CD4-positive, alpha-beta memory T cell (primary cell): ENCODE measurements at regions of chr15 and their contacts with region 1.

Region 1: GRCh38 chr15:43510200-43511011 is 7.0 kb upstream of the MAP1A start:
- DNase-seq: peak; percentile 96 to 98 (median 97)
- H3K4me3 ChIP-seq: peak overlapping the region; percentile 86 to 87
- H3K4me3 Mint-ChIP-seq: peak overlapping the region; percentile 92 to 98 (median 95)
- H3K27ac ChIP-seq: peak overlapping the region; percentile 71
- H3K27ac Mint-ChIP-seq: peak overlapping the region; percentile 96 to 99 (median 97)
- H3K4me1 ChIP-seq: peaks cover 40% of the 10 kb centered on the region
- H3K4me1 Mint-ChIP-seq: peaks cover 23 to 48% (median 38%) of the 10 kb centered on the region in 4 donors
- H3K27me3 ChIP-seq: no peaks in the 10 kb centered on the region
- H3K27me3 Mint-ChIP-seq: no peaks in the 10 kb centered on the region

Region 2: GRCh38 chr15:43329960-43330779 is 180.2 kb before region 1 on chr15 and contains the start of gene LCMT2:
- CTCF ChIA-PET with region 1: interaction called, 3 read pairs
- POLR2A ChIA-PET with region 1: interaction called, 6 read pairs
- intact Hi-C with region 1: loop called (anchors 1 kb)
- DNase-seq: peak; percentile 91 to 95 (median 94)
- H3K4me3 ChIP-seq: peak within 1 kb of the TSS; percentile 67 to 91
- H3K4me3 Mint-ChIP-seq: peak within 1 kb of the TSS; percentile 94 to 99 (median 96)
- H3K27ac ChIP-seq: peak within 1 kb of the TSS; percentile 90
- H3K27ac Mint-ChIP-seq: peak within 1 kb of the TSS; percentile 98 to 100 (median 99)
- H3K4me1 ChIP-seq: peaks cover 22% of the 10 kb centered on the region
- H3K4me1 Mint-ChIP-seq: peaks cover 16 to 50% (median 31%) of the 10 kb centered on the region in 4 donors
- H3K27me3 ChIP-seq: no peaks in the 10 kb centered on the region
- H3K27me3 Mint-ChIP-seq: peaks cover 0 to 3% of the 10 kb centered on the region in 2 donors
- total RNA-seq, gene LCMT2: 17.0 to 17.8 TPM

Region 3: GRCh38 chr15:43440721-43441281 is 69.6 kb before region 1 on chr15:
- CTCF ChIA-PET with region 1: interaction called, 58 read pairs
- POLR2A ChIA-PET with region 1: interaction called, 4 read pairs
- intact Hi-C with region 1: loop called (anchors 1 kb)
- DNase-seq: peak; percentile 10 to 29 (median 14)
- H3K4me3 ChIP-seq: no peak overlapping the region
- H3K4me3 Mint-ChIP-seq: no peak overlapping the region
- H3K27ac ChIP-seq: no peak overlapping the region
- H3K27ac Mint-ChIP-seq: peak overlapping the region in 1 of 7 donors; percentile 13
- H3K4me1 ChIP-seq: no peaks in the 10 kb centered on the region
- H3K4me1 Mint-ChIP-seq: peaks cover 3 to 6% (median 6%) of the 10 kb centered on the region in 4 donors
- H3K27me3 ChIP-seq: no peaks in the 10 kb centered on the region
- H3K27me3 Mint-ChIP-seq: no peaks in the 10 kb centered on the region

Region 4: GRCh38 chr15:43483306-43484128 is 26.9 kb before region 1 on chr15:
- CTCF ChIA-PET with region 1: interaction called, 252 read pairs
- POLR2A ChIA-PET with region 1: interaction called, 14 read pairs
- intact Hi-C with region 1: loop called (anchors 1 kb)
- DNase-seq: peak in 4 of 5 donors; percentile 29 to 40 (median 32)
- H3K4me3 ChIP-seq: no peak overlapping the region
- H3K4me3 Mint-ChIP-seq: no peak overlapping the region
- H3K27ac ChIP-seq: no peak overlapping the region
- H3K27ac Mint-ChIP-seq: peak overlapping the region in 3 of 7 donors; percentile 22 to 55 (median 51)
- H3K4me1 ChIP-seq: no peaks in the 10 kb centered on the region
- H3K4me1 Mint-ChIP-seq: peaks cover 0 to 18% (median 12%) of the 10 kb centered on the region in 4 donors
- H3K27me3 ChIP-seq: no peaks in the 10 kb centered on the region
- H3K27me3 Mint-ChIP-seq: no peaks in the 10 kb centered on the region

Region 5: GRCh38 chr15:43499635-43500034 is 10.8 kb before region 1 on chr15:
- CTCF ChIA-PET with region 1: interaction called, 252 read pairs
- POLR2A ChIA-PET with region 1: interaction called, 97 read pairs
- intact Hi-C with region 1: no loop called
- DNase-seq: no peak
- H3K4me3 ChIP-seq: no peak overlapping the region
- H3K4me3 Mint-ChIP-seq: no peak overlapping the region
- H3K27ac ChIP-seq: no peak overlapping the region
- H3K27ac Mint-ChIP-seq: peak overlapping the region in 2 of 7 donors; percentile 15 to 46
- H3K4me1 ChIP-seq: no peaks in the 10 kb centered on the region
- H3K4me1 Mint-ChIP-seq: peaks cover 0 to 2% (median under 1%) of the 10 kb centered on the region in 4 donors
- H3K27me3 ChIP-seq: no peaks in the 10 kb centered on the region
- H3K27me3 Mint-ChIP-seq: no peaks in the 10 kb centered on the region

Region 6: GRCh38 chr15:43702174-43702573 is 191.8 kb after region 1 on chr15:
- CTCF ChIA-PET with region 1: no interaction called
- POLR2A ChIA-PET with region 1: no interaction called
- intact Hi-C with region 1: no loop called
- DNase-seq: no peak
- H3K4me3 ChIP-seq: no peak overlapping the region
- H3K4me3 Mint-ChIP-seq: no peak overlapping the region
- H3K27ac ChIP-seq: no peak overlapping the region
- H3K27ac Mint-ChIP-seq: no peak overlapping the region
- H3K4me1 ChIP-seq: no peaks in the 10 kb centered on the region
- H3K4me1 Mint-ChIP-seq: no peaks in the 10 kb centered on the region
- H3K27me3 ChIP-seq: no peaks in the 10 kb centered on the region
- H3K27me3 Mint-ChIP-seq: peaks cover 13 to 15% of the 10 kb centered on the region in 2 donors

Region 7: DNA sequence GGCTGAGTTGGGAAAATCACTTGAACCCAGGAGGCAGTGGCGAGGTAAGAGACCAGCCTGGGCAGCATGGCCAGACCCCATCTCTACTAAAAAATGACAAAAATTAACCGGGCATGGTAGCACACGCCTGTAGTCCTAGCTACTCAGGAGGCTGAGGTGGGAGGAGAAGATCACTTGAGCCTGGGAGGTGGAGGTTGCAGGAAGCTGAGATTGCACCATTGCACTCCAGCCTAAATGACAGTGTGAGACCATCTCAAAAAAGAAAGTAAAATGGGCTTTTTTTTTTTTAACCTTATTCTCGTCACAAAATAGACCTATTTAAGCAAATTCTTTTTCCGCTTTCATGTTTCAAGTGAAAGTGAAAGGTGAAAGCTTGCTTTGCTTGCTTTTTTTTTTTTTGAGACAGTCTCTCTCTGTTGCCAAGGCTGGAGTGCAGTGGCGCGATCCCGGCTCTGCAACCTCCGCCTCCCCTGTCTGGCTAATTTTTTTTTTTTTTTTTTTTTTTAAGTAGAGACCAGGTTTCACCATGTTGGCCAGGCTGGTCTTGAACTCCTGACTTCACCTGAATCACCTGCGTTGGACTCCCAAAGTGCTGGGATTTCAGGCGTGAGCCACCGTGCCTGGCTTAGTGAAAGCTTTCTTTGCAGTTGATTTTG is 239.4 kb after region 1 on chr15:
- CTCF ChIA-PET with region 1: no interaction called
- POLR2A ChIA-PET with region 1: interaction called, 5 read pairs
- intact Hi-C with region 1: loop called (anchors 5 kb)
- DNase-seq: peak; percentile 75 to 86 (median 82)
- H3K4me3 ChIP-seq: peak overlapping the region in 1 of 2 donors; percentile 49
- H3K4me3 Mint-ChIP-seq: peak overlapping the region; percentile 69 to 87 (median 82)
- H3K27ac ChIP-seq: peak overlapping the region; percentile 59
- H3K27ac Mint-ChIP-seq: peak overlapping the region; percentile 91 to 96 (median 94)
- H3K4me1 ChIP-seq: peaks cover 66% of the 10 kb centered on the region
- H3K4me1 Mint-ChIP-seq: peaks cover 27 to 70% (median 47%) of the 10 kb centered on the region in 4 donors
- H3K27me3 ChIP-seq: no peaks in the 10 kb centered on the region
- H3K27me3 Mint-ChIP-seq: no peaks in the 10 kb centered on the region

Region 8: DNA sequence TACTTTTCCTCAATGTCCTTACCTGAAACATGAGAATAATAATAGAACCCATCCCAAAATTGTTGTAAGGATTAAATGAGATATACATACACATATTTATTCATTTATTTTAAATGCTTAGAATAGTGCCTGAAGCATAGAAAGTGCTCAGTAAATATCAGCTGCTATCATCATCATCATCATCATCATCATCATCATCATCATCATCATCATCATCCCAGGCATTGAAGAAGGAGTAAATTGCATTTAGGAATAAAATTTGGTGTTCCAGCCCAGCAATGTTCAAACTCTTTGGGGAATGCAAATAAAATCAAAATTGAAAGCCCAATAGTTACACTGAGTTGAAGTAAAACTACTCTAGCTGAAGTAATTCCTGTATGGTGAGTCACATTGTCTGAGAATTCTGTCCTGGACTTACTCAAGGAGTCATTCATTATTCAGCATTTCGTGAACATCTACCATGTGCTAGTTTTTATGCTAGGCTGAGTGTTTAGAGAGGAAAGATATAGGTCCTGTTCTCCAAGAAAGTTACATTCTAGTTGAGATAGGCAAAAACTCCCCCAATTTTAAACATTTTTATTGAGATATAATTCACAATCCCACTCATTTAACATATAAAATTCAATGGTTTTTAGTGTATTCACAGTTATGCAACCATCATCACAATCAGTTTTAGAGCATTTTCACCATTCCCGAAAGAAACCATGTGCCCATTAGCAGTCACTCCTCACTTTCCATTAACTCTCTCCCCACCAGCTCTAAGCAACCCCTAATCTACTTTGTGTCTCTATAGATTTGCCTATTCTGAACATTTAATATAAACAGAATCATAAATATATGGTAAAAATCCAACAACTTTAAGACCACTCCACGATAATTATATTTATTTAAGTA is 577.4 kb after region 1 on chr15:
- CTCF ChIA-PET with region 1: no interaction called
- POLR2A ChIA-PET with region 1: no interaction called
- intact Hi-C with region 1: no loop called
- DNase-seq: no peak
- H3K4me3 ChIP-seq: no peak overlapping the region
- H3K4me3 Mint-ChIP-seq: no peak overlapping the region
- H3K27ac ChIP-seq: no peak overlapping the region
- H3K27ac Mint-ChIP-seq: no peak overlapping the region
- H3K4me1 ChIP-seq: no peaks in the 10 kb centered on the region
- H3K4me1 Mint-ChIP-seq: peaks cover 0 to 1% (median 0%) of the 10 kb centered on the region in 4 donors
- H3K27me3 ChIP-seq: no peaks in the 10 kb centered on the region
- H3K27me3 Mint-ChIP-seq: peaks cover 0 to 3% of the 10 kb centered on the region in 2 donors

Region 9: DNA sequence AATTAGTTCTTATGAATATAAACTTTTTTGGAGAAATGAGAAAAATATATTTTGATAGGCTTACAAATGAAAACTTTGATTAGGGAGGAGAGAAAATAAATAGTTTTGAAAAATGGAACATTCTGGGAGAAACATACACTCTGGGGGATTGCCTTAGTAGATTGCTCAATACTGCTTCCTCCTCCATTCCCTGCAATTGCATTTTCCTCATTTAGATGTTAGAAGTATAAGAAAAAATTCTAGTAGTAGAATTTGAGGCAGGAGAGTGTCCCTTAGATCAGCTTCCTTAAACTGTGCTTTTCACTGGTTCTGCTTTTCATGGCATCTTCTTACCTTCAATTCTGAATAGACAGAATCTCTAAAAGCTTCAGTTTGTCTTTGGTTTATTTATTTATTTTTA is 870.8 kb after region 1 on chr15:
- CTCF ChIA-PET with region 1: no interaction called
- POLR2A ChIA-PET with region 1: no interaction called
- intact Hi-C with region 1: no loop called
- DNase-seq: no peak
- H3K4me3 ChIP-seq: no peak overlapping the region
- H3K4me3 Mint-ChIP-seq: no peak overlapping the region
- H3K27ac ChIP-seq: no peak overlapping the region
- H3K27ac Mint-ChIP-seq: no peak overlapping the region
- H3K4me1 ChIP-seq: no peaks in the 10 kb centered on the region
- H3K4me1 Mint-ChIP-seq: peaks cover 0 to 5% (median 1%) of the 10 kb centered on the region in 4 donors
- H3K27me3 ChIP-seq: no peaks in the 10 kb centered on the region
- H3K27me3 Mint-ChIP-seq: no peaks in the 10 kb centered on the region